ENCODE measurements at regions of chr1 and their contacts with region 1.

Region 1: DNA sequence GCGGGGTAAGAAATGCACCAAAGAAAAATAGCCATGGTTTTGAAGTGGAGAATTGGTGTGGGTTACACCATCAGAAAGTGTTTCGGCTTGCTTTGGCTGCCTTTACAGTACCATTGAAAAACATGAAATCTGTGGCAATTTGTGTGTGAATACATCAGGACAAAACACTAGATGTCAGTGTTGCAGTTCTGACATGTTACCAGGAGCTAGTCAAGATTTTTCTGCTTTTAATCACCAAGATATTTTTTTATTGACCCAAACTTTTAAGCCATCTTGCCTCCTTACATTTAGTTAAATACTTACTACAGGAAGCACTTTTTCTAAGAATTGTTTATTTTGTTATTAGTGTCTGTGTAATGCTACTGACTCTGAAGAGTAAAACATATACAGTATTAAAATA is 14.3 kb downstream of the RRP15 start:
- DNase-seq: peak; percentile 17
- H3K4me3 ChIP-seq: no peak overlapping the region
- H3K27me3 ChIP-seq: no peaks in the 10 kb centered on the region
- CTCF ChIP-seq: peak; percentile 63

Region 2: DNA sequence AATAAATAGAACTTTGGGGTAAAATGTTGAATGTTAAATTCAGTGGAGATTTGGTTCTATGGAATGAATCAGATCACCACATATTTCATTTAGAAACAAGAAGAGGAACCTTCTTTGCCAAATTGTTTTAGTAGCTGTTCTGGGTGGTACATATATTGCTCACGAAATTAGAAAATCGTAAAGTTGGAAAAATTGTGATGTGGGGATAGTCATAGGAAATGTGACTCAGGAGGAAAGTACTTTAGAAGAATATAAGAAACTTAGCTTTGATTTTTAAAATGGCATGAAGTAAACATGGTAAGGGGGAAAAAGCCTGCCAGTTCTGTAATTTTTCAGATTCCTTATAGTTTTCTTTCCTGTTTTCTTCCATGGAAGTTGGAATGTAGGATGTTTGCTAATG is 13.1 kb after region 1 on chr1:
- CTCF ChIA-PET with region 1: interaction called, 12 read pairs
- POLR2A ChIA-PET with region 1: no interaction called
- DNase-seq: no peak
- H3K4me3 ChIP-seq: no peak overlapping the region
- H3K27me3 ChIP-seq: no peaks in the 10 kb centered on the region
- CTCF ChIP-seq: no peak

Region 3: GRCh38 chr1:218323568-218324225 is 24.3 kb after region 1 on chr1:
- CTCF ChIA-PET with region 1: no interaction called
- POLR2A ChIA-PET with region 1: no interaction called
- DNase-seq: no peak
- H3K4me3 ChIP-seq: no peak overlapping the region
- H3K27me3 ChIP-seq: no peaks in the 10 kb centered on the region
- CTCF ChIP-seq: no peak

Region 4: GRCh38 chr1:219659005-219659600 is 1359.7 kb after region 1 on chr1:
- CTCF ChIA-PET with region 1: interaction called, 4 read pairs
- POLR2A ChIA-PET with region 1: interaction called, 13 read pairs
- DNase-seq: no peak
- H3K4me3 ChIP-seq: no peak overlapping the region
- H3K27me3 ChIP-seq: no peaks in the 10 kb centered on the region
- CTCF ChIP-seq: no peak

Measured in BJ (cell line).